ENCODE measurements at regions of chr2 and their contacts with region 1.

Region 1: DNA sequence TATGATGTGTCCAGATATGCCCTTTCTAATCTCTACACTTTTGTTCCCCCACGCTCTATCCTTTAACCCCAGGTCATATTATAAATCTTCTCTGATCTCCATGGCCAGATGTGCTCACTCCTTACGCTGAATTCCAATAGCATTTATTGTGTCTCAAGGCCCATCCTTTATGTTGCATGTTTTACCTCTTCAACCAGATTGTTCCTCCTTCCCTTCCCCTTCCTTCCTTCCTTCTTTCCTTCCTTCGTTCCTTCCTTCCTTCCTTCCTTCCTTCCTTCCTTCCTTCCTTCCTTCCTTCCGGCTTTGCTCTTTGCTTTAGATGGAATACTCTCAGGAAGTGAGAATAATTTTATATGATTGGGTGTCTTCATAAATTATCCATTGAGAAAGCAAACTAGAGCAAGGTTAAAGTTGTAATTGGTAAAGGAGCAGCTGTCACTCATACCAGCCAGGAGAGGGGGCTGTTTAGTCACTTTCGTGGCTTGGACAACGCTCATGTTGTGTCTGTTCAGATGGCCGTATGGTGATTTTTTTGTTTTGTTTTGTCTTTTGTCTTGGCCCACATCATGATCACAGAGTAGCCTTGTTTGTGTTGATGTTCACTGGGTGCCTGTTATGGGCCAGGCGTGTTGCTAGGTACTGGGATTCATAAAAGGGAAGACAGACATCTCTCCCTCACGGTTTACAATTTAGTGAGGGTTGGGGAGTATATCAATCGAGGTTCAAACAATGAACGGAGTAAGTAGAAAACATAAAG is 68.0 kb downstream of the DAW1 start:
- DNase-seq: no peak
- ATAC-seq: peak; percentile 90
- H3K4me3 ChIP-seq: no peak overlapping the region
- H3K27ac ChIP-seq: no peak overlapping the region
- H3K4me1 ChIP-seq: no peaks in the 10 kb centered on the region
- H3K27me3 ChIP-seq: no peaks in the 10 kb centered on the region; a peak in 1 of 4 replicates
- CTCF ChIP-seq: peak; percentile 56 to 64 (median 62)
- EP300 ChIP-seq: no peak
- POLR2A ChIP-seq: no peak
- RAD21 ChIP-seq: peak; percentile 56

Region 2: DNA sequence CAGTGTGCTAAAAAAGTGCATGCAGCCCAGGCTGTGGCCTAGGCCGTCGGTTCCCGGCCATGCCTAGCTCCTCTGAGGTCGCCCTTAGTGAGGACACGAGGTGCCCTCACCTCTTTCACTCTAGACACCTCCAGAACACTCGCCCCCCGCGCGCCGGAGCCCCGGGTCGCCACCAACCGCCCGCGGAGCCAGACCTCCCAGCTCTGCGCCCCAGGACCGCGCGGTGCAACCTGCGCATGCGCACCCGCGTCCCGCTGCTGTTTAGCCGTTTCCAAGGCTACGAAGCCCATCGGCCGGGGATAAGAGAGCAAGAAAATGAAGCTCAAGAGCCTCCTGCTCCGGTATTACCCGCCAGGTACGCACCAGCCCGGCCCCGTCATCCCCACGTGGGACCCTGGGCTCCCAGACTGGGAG is 68.1 kb before region 1 on chr2 and contains the start of gene DAW1:
- CTCF ChIA-PET with region 1: no interaction called
- POLR2A ChIA-PET with region 1: no interaction called
- RAD21 ChIA-PET with region 1: no interaction called
- SMC1A ChIA-PET with region 1: no interaction called
- in situ Hi-C with region 1: no loop called
- intact Hi-C with region 1: no loop called
- DNase-seq: no peak
- ATAC-seq: peak; percentile 24; the same call in 1 of the 3 replicates
- H3K4me3 ChIP-seq: no peak within 1 kb of the TSS
- H3K27ac ChIP-seq: no peak within 1 kb of the TSS
- H3K4me1 ChIP-seq: no peaks in the 10 kb centered on the region
- H3K27me3 ChIP-seq: peaks cover 0 to 11% of the 10 kb centered on the region in 2 experiments; a peak in 2 of 4 replicates
- CTCF ChIP-seq: no peak
- EP300 ChIP-seq: no peak
- POLR2A ChIP-seq: no peak
- RAD21 ChIP-seq: no peak
- polyA plus RNA-seq, gene DAW1: 0.04 TPM in 1 of 2 experiments, not detected in the other

Region 3: DNA sequence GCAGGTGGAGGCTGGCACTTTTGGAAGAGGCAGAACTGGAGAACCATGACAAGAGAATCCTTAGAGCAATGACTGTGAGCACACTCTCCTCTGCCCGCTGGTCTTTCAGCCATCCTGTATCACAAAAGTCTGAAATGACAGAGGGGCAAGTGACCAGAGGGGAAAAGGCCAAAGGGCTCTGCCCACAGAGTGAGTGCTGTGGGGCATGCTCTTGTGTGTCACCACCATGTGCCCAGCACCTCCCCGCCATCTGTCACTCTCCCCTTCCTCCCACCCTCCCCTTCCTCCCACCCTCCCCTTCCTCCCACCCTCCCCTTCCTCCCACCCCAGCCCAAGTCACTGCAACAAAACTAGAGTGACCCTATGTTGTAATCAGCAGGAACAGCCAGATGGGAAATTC is 36.1 kb before region 1 on chr2:
- CTCF ChIA-PET with region 1: no interaction called
- POLR2A ChIA-PET with region 1: no interaction called
- RAD21 ChIA-PET with region 1: no interaction called
- SMC1A ChIA-PET with region 1: no interaction called
- in situ Hi-C with region 1: no loop called
- intact Hi-C with region 1: no loop called
- DNase-seq: no peak
- ATAC-seq: no peak
- H3K4me3 ChIP-seq: no peak overlapping the region
- H3K27ac ChIP-seq: no peak overlapping the region
- H3K4me1 ChIP-seq: no peaks in the 10 kb centered on the region
- H3K27me3 ChIP-seq: peaks cover 0 to 2% of the 10 kb centered on the region in 2 experiments; a peak in 2 of 4 replicates
- CTCF ChIP-seq: no peak
- EP300 ChIP-seq: no peak
- POLR2A ChIP-seq: no peak
- RAD21 ChIP-seq: no peak

Region 4: DNA sequence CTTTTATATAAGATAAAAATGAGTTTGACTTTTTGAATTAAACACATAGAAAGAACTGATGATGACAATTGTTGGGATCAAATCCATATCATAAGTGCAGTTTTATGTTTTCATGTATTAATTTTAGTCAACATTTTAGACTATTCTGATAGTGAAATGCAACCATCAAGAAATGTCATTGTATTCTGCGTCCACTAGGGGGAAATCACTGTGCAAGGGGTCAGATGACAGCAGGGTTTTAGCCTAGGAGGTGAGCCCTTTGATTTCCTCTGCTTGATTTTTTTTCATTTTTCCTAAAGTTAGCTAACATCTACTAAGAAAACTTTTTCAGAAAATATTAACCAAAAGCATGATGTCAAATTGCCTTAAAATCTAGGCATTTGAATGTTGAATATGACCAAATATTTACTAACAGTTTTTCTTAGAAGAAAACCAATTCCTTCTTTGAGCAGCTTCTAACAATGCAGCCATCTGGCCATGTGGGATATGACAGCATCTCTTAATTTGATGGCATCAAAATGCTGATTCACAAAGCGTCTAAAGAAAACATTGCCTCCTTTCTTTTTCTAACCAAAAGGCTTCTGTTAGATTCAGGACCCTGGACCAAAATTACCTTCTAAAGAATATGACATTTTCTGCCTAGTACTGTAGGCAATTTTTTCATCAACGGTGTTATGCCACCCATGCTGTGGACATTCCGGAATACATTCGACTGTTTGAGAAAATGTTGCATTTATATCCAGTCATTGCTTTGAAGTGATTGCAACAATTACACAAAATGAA is 100.5 kb after region 1 on chr2:
- CTCF ChIA-PET with region 1: interaction called, 3 read pairs
- POLR2A ChIA-PET with region 1: no interaction called
- RAD21 ChIA-PET with region 1: interaction called, 4 read pairs
- SMC1A ChIA-PET with region 1: no interaction called
- in situ Hi-C with region 1: no loop called
- intact Hi-C with region 1: loop called (anchors 5 kb)
- DNase-seq: no peak
- ATAC-seq: peak; percentile 87
- H3K4me3 ChIP-seq: no peak overlapping the region
- H3K27ac ChIP-seq: no peak overlapping the region
- H3K4me1 ChIP-seq: no peaks in the 10 kb centered on the region
- H3K27me3 ChIP-seq: no peaks in the 10 kb centered on the region
- CTCF ChIP-seq: peak; percentile 62 to 64 (median 62); a peak in 5 of 6 replicates
- EP300 ChIP-seq: no peak
- POLR2A ChIP-seq: no peak
- RAD21 ChIP-seq: peak; percentile 59

Region 5: GRCh38 chr2:228197504-228197903 is 258.1 kb after region 1 on chr2:
- CTCF ChIA-PET with region 1: no interaction called
- POLR2A ChIA-PET with region 1: no interaction called
- RAD21 ChIA-PET with region 1: no interaction called
- SMC1A ChIA-PET with region 1: no interaction called
- in situ Hi-C with region 1: no loop called
- intact Hi-C with region 1: no loop called
- DNase-seq: no peak
- ATAC-seq: no peak
- H3K4me3 ChIP-seq: no peak overlapping the region
- H3K27ac ChIP-seq: no peak overlapping the region
- H3K4me1 ChIP-seq: no peaks in the 10 kb centered on the region
- H3K27me3 ChIP-seq: no peaks in the 10 kb centered on the region
- CTCF ChIP-seq: no peak
- EP300 ChIP-seq: no peak
- POLR2A ChIP-seq: no peak
- RAD21 ChIP-seq: no peak